ENCODE measurements at regions of chr12 and their contacts with region 1.

Region 1: DNA sequence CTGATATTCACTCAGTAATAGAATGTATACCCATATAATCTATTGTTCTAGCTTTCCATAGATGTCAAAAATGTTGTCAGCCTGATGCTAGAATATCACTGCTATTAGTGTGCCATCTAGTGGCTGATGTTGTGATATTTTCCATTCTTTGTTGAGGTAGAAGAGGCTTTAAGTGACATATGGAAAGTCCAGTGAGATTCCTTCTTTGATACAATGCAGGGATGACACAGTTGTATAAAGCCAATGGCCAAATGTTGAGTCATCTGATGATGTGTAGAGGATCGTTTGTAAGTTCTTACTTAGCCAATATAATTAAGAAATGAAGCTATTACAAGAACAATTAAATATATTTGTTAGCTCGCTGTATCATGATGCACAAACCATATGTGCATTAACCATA is 58.1 kb upstream of the PCED1B start:
- DNase-seq: peak; percentile 86
- H3K4me3 ChIP-seq: no peak overlapping the region
- H3K27ac ChIP-seq: no peak overlapping the region
- H3K4me1 ChIP-seq: peaks cover 11% of the 10 kb centered on the region
- H3K27me3 ChIP-seq: no peaks in the 10 kb centered on the region
- CTCF ChIP-seq: peak; percentile 75

Region 2: DNA sequence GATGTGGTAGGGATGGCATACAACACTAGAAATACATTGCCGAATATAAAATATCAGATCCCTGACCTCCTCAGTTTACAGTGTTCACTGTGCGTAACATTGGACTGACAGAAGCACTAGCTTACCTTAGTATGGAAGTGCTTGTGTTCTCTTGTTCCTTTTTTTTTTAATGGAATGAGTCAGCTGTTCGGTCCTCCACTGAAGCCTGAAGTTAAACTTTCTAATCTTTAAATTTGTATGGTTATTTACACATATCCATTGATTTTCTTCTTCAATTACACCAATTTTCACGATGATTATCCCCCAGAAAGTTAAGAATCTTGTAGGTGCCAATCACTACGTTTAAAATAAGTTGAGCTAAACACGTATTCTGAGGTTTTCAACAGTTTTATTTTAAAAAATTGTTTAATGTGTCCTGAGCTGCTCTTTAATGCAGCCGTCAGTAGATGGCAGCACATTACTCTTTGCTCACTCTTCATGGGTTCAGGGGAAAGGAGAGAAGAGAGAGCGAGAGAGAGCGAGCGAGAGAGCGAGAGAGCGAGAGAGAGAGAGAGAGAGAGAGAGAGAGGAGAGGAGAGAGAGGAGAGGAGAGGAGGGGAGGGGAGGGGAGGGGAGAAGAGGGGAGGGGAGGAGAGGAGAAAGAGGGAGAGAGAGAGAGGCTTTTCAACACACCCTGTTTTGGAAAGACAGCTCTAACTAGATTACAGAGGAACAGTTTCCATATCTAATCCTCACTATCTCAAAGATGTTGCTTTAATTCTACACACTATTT is 896.3 kb before region 1 on chr12:
- CTCF ChIA-PET with region 1: interaction called, 10 read pairs
- POLR2A ChIA-PET with region 1: no interaction called
- intact Hi-C with region 1: no loop called
- DNase-seq: peak; percentile 92
- H3K4me3 ChIP-seq: peak overlapping the region; percentile 18
- H3K27ac ChIP-seq: peak overlapping the region; percentile 3
- H3K4me1 ChIP-seq: no peaks in the 10 kb centered on the region
- H3K27me3 ChIP-seq: no peaks in the 10 kb centered on the region
- CTCF ChIP-seq: peak; percentile 93

Region 3: GRCh38 chr12:46342562-46343033 is 678.7 kb before region 1 on chr12:
- CTCF ChIA-PET with region 1: no interaction called
- POLR2A ChIA-PET with region 1: no interaction called
- intact Hi-C with region 1: loop called (anchors 2 kb)
- DNase-seq: peak; percentile 83
- H3K4me3 ChIP-seq: no peak overlapping the region
- H3K27ac ChIP-seq: no peak overlapping the region
- H3K4me1 ChIP-seq: no peaks in the 10 kb centered on the region
- H3K27me3 ChIP-seq: no peaks in the 10 kb centered on the region
- CTCF ChIP-seq: peak; percentile 77

Region 4: DNA sequence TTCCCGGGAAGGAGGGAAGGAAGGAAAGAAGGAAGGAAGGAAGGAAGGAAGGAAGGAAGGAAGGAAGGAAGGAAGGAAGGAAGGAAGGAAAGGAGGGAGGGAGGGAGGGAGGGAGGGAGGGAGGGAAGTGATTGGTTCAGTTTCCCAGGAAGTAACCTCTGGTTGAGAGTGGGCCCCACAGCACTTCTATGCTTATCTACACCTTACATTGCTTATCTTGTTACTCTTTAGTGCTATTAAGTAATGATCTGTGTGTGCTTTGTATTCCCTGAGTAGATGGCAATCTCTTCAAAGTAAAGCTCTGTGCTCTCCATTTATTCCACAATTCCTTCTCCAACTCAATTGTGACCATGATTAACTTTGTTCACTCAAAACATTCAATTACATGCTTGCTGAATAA is 270.1 kb before region 1 on chr12:
- CTCF ChIA-PET with region 1: no interaction called
- POLR2A ChIA-PET with region 1: no interaction called
- intact Hi-C with region 1: loop called (anchors 2 kb)
- DNase-seq: peak; percentile 78
- H3K4me3 ChIP-seq: no peak overlapping the region
- H3K27ac ChIP-seq: peak overlapping the region; percentile 83
- H3K4me1 ChIP-seq: peaks cover 27% of the 10 kb centered on the region
- H3K27me3 ChIP-seq: no peaks in the 10 kb centered on the region
- CTCF ChIP-seq: no peak

Region 5: DNA sequence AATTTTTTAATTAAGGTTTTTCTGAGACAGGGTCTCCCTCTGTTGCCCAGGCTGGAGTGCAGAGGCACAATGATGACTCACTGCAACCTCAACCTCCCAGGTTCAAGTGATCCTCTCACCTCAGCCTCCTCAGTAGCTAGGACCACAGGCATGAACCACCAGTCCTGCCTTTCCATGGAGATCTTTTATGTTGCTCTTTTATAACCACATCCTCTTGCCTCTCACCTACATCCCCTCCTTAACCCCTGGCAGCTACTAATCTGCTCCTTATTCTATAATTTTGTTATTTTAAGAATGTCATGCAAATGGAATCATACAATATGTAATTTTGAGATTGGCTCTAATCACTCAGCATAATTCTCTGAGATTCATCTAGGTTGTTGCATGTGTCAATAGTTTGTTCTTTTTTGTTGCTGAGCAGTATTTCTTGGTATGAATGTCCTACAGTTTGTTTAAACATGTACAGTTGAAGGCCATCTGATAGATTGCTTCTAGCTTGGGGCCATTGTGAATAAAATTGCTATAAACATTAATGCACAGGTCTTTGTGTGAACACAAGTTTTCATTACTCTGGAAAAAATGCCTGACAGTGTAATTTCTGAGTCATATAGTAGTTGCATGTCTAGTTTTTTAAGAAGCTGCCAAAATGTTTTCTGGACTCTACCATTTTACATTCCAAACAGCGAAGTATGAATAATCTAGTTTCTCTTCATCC is 307.7 kb after region 1 on chr12:
- CTCF ChIA-PET with region 1: no interaction called
- POLR2A ChIA-PET with region 1: no interaction called
- intact Hi-C with region 1: no loop called
- DNase-seq: no peak
- H3K4me3 ChIP-seq: no peak overlapping the region
- H3K27ac ChIP-seq: no peak overlapping the region
- H3K4me1 ChIP-seq: no peaks in the 10 kb centered on the region
- H3K27me3 ChIP-seq: no peaks in the 10 kb centered on the region
- CTCF ChIP-seq: no peak

Region 6: DNA sequence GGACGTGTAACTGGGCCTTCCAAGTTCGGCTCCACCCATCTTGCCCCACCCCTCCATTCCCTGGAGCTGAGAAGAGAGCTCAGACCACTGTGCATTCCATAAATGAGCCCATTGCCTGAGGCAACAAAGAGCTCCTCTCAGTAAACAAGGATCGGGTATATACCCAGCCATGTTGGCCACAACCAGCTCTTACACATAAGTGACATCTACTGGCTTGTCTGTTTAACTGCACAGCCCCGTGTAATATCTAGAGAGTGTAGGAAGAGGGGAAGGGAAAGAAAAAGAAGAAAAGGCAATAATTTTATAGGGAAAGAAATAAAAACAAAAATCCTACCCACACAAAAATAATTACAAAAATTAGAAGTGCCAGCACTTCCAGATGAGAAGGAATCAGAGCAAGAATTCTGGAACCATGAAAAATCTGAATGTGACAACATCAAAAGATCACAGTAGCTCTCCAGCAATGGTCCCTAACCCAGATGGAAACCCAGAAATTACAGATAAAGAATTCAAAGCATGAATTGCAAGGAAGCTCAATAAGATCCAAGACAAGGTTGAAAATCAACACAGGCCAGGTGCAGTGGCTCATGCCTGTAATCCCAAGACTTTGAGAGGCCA is 376.5 kb after region 1 on chr12:
- CTCF ChIA-PET with region 1: interaction called, 10 read pairs
- POLR2A ChIA-PET with region 1: no interaction called
- intact Hi-C with region 1: no loop called
- DNase-seq: peak; percentile 87
- H3K4me3 ChIP-seq: no peak overlapping the region
- H3K27ac ChIP-seq: no peak overlapping the region
- H3K4me1 ChIP-seq: peaks cover 10% of the 10 kb centered on the region
- H3K27me3 ChIP-seq: no peaks in the 10 kb centered on the region
- CTCF ChIP-seq: peak; percentile 90

Measured in A673 (cell line).